Lower leg skin (tissue), 4 donors: ENCODE measurements at regions of chr19 and their contacts with region 1.

Region 1: GRCh38 chr19:28324275-28325060 is 888.5 kb downstream of the UQCRFS1 start:
- DNase-seq: peak in 1 of 2 donors; percentile 13
- H3K4me3 ChIP-seq: no peak overlapping the region
- CTCF ChIP-seq: no peak
- POLR2A ChIP-seq: no peak

Region 2: GRCh38 chr19:27974082-27974513 is 350.4 kb before region 1 on chr19:
- intact Hi-C with region 1: loop called (anchors 10 kb)
- DNase-seq: no peak
- H3K4me3 ChIP-seq: no peak overlapping the region
- CTCF ChIP-seq: no peak
- POLR2A ChIP-seq: no peak

Region 3: DNA sequence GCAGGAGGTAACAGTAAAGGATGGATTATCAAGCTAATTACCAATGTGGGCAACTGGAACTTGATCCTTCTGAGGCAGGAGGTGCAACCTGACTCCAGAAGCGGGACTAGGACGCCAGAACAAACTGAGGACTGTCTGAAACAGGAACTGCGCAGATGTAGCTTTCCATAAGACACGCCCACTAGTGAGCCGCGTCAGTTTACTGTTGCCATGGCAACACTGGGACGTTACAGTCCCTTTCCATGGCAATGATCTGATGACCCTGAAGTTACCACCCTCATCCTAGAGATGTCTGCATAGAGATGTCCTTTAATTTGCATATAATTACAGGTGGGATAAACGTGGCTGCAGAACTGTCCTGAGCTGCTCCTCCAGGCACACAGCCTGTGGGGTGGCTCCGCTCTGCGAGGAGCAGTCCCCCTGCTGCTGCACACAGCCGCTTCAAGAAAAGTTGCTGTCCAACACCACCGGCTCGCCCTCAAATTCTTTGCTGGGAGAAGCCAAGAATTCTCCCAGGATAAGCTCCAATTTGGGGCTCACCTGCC is 71.9 kb after region 1 on chr19:
- intact Hi-C with region 1: no loop called
- DNase-seq: no peak
- H3K4me3 ChIP-seq: no peak overlapping the region
- CTCF ChIP-seq: no peak
- POLR2A ChIP-seq: no peak

Region 4: GRCh38 chr19:28641395-28641794 is 316.9 kb after region 1 on chr19:
- intact Hi-C with region 1: no loop called
- DNase-seq: no peak
- H3K4me3 ChIP-seq: no peak overlapping the region
- CTCF ChIP-seq: no peak
- POLR2A ChIP-seq: no peak